ENCODE measurements at regions of chr17 and their contacts with region 1.

Region 1: DNA sequence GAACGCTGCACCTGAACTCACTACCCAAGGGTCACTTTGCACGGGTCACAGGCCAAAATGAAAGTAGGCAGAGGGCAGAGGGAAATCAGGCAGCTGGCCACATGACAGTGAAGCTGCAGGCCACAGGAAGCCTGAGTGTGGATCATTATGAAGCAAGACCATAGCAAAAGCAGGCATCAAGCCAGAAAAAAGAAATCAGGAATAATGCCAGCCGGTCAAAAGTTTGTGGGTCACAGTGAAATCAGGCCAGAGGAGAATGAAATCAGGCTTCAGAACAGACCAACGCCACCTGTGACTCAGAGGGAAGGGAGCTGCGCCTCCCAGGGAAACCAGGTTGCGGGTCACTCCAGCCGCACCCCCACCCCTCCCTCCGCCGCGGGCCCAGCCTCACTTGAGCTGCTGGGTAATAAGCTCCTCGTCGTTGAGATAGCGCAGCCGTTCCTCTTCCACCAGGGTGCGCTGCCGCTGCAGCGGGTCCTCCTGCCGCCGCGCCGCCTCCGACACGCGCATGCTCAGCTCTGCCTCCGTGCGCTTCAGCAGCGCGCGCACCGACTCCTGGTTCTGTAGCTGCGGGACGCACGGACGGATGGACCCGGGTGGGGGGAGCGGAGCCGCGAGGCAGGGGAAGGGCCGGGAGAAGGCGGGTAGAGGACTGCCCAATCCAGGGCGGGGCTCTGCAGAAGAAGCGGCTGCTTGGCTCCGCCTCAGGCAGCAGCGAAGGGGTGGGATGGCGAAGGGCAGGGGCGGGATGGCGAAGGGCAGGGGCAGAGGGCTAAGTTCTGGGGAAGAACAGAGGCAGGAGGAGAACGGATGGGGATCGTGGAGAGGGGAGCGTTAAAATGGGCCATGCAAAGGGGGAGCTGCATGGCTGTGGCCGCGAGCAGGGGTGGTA is 47.7 kb downstream of the SRCIN1 start:
- DNase-seq: peak; percentile 87
- ATAC-seq: peak; percentile 93
- H3K4me3 ChIP-seq: peak overlapping the region; percentile 48 to 71
- H3K27ac ChIP-seq: peak overlapping the region; percentile 77; the same call in 1 of the 2 replicates
- H3K4me1 ChIP-seq: peaks cover 4% of the 10 kb centered on the region; the same call in 1 of the 2 replicates
- H3K27me3 ChIP-seq: no peaks in the 10 kb centered on the region
- CTCF ChIP-seq: peak; percentile 87

Region 2: GRCh38 chr17:38584350-38584925 is 26.4 kb after region 1 on chr17:
- CTCF ChIA-PET with region 1: interaction called, 38 read pairs
- POLR2A ChIA-PET with region 1: interaction called, 3 read pairs
- in situ Hi-C with region 1: no loop called
- intact Hi-C with region 1: no loop called
- DNase-seq: no peak
- ATAC-seq: peak; percentile 90
- H3K4me3 ChIP-seq: 0 out of 4 replicates have a peak overlapping the region, but pooled peaks of 1 of the 2 experiments have one; percentile 18
- H3K27ac ChIP-seq: no peak overlapping the region
- H3K4me1 ChIP-seq: peaks cover 7% of the 10 kb centered on the region
- H3K27me3 ChIP-seq: no peaks in the 10 kb centered on the region
- CTCF ChIP-seq: peak; percentile 91